ENCODE measurements at regions of chr5 and their contacts with region 1.

Region 1: DNA sequence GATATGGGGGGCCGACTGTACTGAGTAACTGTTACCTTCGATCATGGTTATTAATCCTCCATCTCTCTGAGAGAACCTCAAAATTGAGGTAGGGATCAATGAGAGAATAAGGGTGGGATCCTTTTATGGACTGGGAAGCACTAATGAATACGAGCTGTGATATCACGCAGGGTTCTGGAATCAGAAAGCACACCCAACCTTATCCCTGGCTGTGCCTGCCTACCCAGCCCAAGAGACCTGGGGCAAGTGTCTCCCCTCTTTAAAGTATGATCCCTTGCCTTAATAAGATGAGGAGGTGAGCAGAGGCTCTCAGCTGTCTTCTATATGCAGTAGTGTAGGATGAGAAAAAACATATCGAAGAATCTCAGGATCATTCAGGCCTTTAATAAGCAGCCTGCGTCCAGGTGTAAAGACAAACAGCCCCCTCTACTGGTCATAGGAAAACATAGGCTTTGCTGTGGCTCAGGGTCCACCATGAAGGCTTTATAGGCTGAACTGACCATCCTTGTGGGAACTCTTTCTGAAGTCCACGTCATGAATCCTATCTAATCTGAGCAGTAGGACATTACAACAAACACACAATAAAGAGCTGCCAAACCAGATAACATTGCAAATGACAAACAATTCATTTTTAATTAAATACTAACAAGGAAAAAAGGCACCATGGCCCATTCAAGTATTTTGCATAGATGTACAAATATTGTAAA is 16.8 kb downstream of the NIPAL4 start:
- DNase-seq: peak; percentile 75
- ATAC-seq: peak; percentile 69
- H3K4me3 ChIP-seq: no peak overlapping the region
- H3K27ac ChIP-seq: no peak overlapping the region
- H3K4me1 ChIP-seq: peaks cover 49% of the 10 kb centered on the region
- H3K27me3 ChIP-seq: no peaks in the 10 kb centered on the region
- CTCF ChIP-seq: peak; percentile 85
- EP300 ChIP-seq: no peak
- POLR2A ChIP-seq: no peak
- RAD21 ChIP-seq: peak; percentile 68

Region 2: DNA sequence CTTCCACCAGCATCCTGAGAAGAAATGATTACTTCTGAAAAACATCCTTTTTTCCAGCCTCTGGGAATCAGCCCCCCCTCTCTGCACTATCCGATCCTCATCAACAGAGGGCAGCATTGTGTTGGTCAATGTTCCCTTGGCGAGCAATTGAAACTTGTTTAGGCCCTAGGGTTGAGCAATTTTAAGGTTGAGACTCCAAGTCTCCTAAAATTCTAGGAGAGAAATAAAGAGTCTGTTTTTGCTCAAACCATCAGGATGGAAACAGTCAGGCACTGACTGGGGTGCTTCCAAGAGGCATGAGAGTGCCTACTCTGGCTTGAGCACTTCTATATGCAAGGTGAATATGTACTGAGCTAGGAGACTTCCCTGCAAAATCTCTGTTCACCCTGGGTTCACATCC is 223.3 kb before region 1 on chr5:
- CTCF ChIA-PET with region 1: no interaction called
- POLR2A ChIA-PET with region 1: no interaction called
- in situ Hi-C with region 1: loop called (anchors 5 kb)
- intact Hi-C with region 1: loop called (anchors 2 kb)
- DNase-seq: peak; percentile 35
- ATAC-seq: peak; percentile 87
- H3K4me3 ChIP-seq: no peak overlapping the region
- H3K27ac ChIP-seq: no peak overlapping the region
- H3K4me1 ChIP-seq: no peaks in the 10 kb centered on the region
- H3K27me3 ChIP-seq: no peaks in the 10 kb centered on the region; a peak in 1 of 5 replicates
- CTCF ChIP-seq: peak; percentile 86
- EP300 ChIP-seq: no peak
- POLR2A ChIP-seq: no peak
- RAD21 ChIP-seq: peak; percentile 80

Region 3: DNA sequence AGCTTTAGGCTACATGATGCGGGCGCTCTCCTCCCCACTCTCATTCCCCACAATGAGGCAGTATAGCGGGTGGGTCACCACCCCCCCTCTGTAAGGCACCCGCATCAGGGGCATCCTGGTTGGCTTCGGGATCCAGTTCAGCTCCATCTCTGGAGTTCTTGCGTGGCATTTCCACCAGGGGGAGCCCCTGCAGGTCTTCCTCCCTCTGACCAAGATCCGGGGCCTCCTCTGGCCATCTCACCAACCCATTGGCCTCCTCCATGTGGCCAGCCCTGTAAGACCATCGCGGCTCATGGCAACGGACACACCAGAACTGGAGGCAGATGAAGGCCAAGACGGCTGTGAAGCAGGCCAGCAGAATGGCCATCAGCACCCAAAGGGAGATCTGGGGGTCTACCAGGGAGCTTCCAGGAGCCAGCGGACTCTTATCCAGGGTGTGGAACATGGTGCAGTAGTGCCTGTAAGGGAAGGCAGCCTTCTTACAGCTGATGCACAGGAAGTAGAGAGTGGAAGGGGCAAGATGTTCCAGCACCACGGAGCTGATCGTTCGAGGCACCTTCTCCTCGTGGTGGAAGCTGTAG is 133.9 kb before region 1 on chr5:
- CTCF ChIA-PET with region 1: interaction called, 15 read pairs
- POLR2A ChIA-PET with region 1: no interaction called
- in situ Hi-C with region 1: loop called (anchors 5 kb)
- intact Hi-C with region 1: loop called (anchors 1 kb)
- DNase-seq: peak; percentile 22
- ATAC-seq: peak; percentile 91
- H3K4me3 ChIP-seq: no peak overlapping the region
- H3K27ac ChIP-seq: no peak overlapping the region
- H3K4me1 ChIP-seq: no peaks in the 10 kb centered on the region
- H3K27me3 ChIP-seq: no peaks in the 10 kb centered on the region
- CTCF ChIP-seq: peak; percentile 73
- EP300 ChIP-seq: no peak
- POLR2A ChIP-seq: no peak
- RAD21 ChIP-seq: no peak

Region 4: GRCh38 chr5:157390551-157391297 is 86.1 kb before region 1 on chr5:
- CTCF ChIA-PET with region 1: no interaction called
- POLR2A ChIA-PET with region 1: no interaction called
- in situ Hi-C with region 1: no loop called
- intact Hi-C with region 1: loop called (anchors 1 kb)
- DNase-seq: peak; percentile 93
- ATAC-seq: peak; percentile 99
- H3K4me3 ChIP-seq: no peak overlapping the region
- H3K27ac ChIP-seq: peak overlapping the region; percentile 23
- H3K4me1 ChIP-seq: peaks cover 45% of the 10 kb centered on the region
- H3K27me3 ChIP-seq: no peaks in the 10 kb centered on the region
- CTCF ChIP-seq: no peak
- EP300 ChIP-seq: no peak; a peak in 1 of 4 replicates
- POLR2A ChIP-seq: no peak
- RAD21 ChIP-seq: no peak

Region 5: GRCh38 chr5:157511651-157512644 is 35.1 kb after region 1 on chr5:
- CTCF ChIA-PET with region 1: no interaction called
- POLR2A ChIA-PET with region 1: interaction called, 10 read pairs
- in situ Hi-C with region 1: no loop called
- intact Hi-C with region 1: no loop called
- DNase-seq: peak; percentile 79
- ATAC-seq: peak; percentile 87
- H3K4me3 ChIP-seq: peak overlapping the region in 1 of 3 experiments; percentile 27; a peak in 3 of 6 replicates
- H3K27ac ChIP-seq: peak overlapping the region; percentile 16
- H3K4me1 ChIP-seq: peaks cover 26% of the 10 kb centered on the region
- H3K27me3 ChIP-seq: no peaks in the 10 kb centered on the region
- CTCF ChIP-seq: no peak
- EP300 ChIP-seq: peak in 1 of 2 experiments; percentile 33; a peak in 1 of 4 replicates
- POLR2A ChIP-seq: no peak
- RAD21 ChIP-seq: no peak